Heart right ventricle (tissue), 16 donors: ENCODE measurements at regions of chr13 and their contacts with region 1.

Region 1: GRCh38 chr13:51583875-51584730 is at the start of gene WDFY2:
- DNase-seq: peak; percentile 100
- ATAC-seq: peak; percentile 94 to 98 (median 96)
- H3K4me3 ChIP-seq: peak within 1 kb of the TSS; percentile 68 to 94 (median 88)
- H3K27ac ChIP-seq: peak within 1 kb of the TSS; percentile 68 to 94 (median 90)
- H3K4me1 ChIP-seq: peaks cover 0 to 45% (median 32%) of the 10 kb centered on the region in 9 donors
- H3K27me3 ChIP-seq: no peaks in the 10 kb centered on the region
- CTCF ChIP-seq: peak in 4 of 9 donors; percentile 16 to 44 (median 36)
- total RNA-seq, gene WDFY2: 4.7 to 7.5 (median 6.2) TPM

Region 2: DNA sequence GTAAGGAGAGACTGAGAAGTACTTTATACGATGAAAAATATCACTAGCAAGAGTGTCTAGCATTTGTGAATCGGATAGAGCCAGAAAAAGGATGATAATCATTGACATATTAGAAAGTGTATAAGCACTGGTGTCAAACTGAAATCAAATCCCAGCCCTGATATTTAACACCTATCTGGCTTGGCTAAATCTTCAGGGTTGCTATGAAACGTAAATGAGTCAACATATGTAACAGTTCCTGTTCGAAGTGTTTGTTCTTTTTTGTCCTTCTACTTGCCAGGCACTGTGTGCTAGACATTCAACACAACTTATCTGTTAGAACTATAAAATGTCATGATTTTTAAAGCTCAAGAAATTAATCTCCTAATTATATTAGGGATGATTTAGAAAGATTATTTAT is 203.8 kb before region 1 on chr13:
- intact Hi-C with region 1: no loop called
- DNase-seq: no peak
- ATAC-seq: peak in 3 of 8 donors; percentile 64 to 88 (median 85)
- H3K4me3 ChIP-seq: no peak overlapping the region
- H3K27ac ChIP-seq: no peak overlapping the region
- H3K4me1 ChIP-seq: peaks cover 0 to 4% (median 0%) of the 10 kb centered on the region in 9 donors
- H3K27me3 ChIP-seq: no peaks in the 10 kb centered on the region
- CTCF ChIP-seq: no peak

Region 3: GRCh38 chr13:51452361-51453206 is 131.5 kb before region 1 on chr13 and contains the start of gene INTS6:
- intact Hi-C with region 1: loop called (anchors 1 to 10 kb)
- DNase-seq: peak; percentile 99 to 100
- ATAC-seq: peak; percentile 91 to 97 (median 96)
- H3K4me3 ChIP-seq: peak within 1 kb of the TSS; percentile 85 to 99 (median 94)
- H3K27ac ChIP-seq: peak within 1 kb of the TSS; percentile 91 to 100 (median 99)
- H3K4me1 ChIP-seq: peaks cover 2 to 47% (median 30%) of the 10 kb centered on the region in 9 donors
- H3K27me3 ChIP-seq: no peaks in the 10 kb centered on the region
- CTCF ChIP-seq: no peak
- total RNA-seq, gene INTS6: 20.2 to 31.1 (median 24.8) TPM

Region 4: GRCh38 chr13:51542346-51543242 is 41.5 kb before region 1 on chr13:
- intact Hi-C with region 1: loop called in 2 of 10 experiments (anchors 2 to 5 kb)
- DNase-seq: no peak
- ATAC-seq: peak in 1 of 8 donors; percentile 42
- H3K4me3 ChIP-seq: no peak overlapping the region
- H3K27ac ChIP-seq: peak overlapping the region in 1 of 10 donors; percentile 10
- H3K4me1 ChIP-seq: peaks cover 0 to 31% (median 5%) of the 10 kb centered on the region in 9 donors
- H3K27me3 ChIP-seq: no peaks in the 10 kb centered on the region
- CTCF ChIP-seq: no peak

Region 5: GRCh38 chr13:51729866-51730546 is 145.9 kb after region 1 on chr13:
- intact Hi-C with region 1: loop called in 7 of 10 experiments (anchors 2 to 10 kb)
- DNase-seq: no peak
- ATAC-seq: peak; percentile 43 to 80 (median 64)
- H3K4me3 ChIP-seq: peak overlapping the region in 1 of 10 donors; percentile 6
- H3K27ac ChIP-seq: peak overlapping the region; percentile 19 to 80 (median 58)
- H3K4me1 ChIP-seq: peaks cover 0 to 56% (median 27%) of the 10 kb centered on the region in 9 donors
- H3K27me3 ChIP-seq: no peaks in the 10 kb centered on the region
- CTCF ChIP-seq: no peak

Region 6: DNA sequence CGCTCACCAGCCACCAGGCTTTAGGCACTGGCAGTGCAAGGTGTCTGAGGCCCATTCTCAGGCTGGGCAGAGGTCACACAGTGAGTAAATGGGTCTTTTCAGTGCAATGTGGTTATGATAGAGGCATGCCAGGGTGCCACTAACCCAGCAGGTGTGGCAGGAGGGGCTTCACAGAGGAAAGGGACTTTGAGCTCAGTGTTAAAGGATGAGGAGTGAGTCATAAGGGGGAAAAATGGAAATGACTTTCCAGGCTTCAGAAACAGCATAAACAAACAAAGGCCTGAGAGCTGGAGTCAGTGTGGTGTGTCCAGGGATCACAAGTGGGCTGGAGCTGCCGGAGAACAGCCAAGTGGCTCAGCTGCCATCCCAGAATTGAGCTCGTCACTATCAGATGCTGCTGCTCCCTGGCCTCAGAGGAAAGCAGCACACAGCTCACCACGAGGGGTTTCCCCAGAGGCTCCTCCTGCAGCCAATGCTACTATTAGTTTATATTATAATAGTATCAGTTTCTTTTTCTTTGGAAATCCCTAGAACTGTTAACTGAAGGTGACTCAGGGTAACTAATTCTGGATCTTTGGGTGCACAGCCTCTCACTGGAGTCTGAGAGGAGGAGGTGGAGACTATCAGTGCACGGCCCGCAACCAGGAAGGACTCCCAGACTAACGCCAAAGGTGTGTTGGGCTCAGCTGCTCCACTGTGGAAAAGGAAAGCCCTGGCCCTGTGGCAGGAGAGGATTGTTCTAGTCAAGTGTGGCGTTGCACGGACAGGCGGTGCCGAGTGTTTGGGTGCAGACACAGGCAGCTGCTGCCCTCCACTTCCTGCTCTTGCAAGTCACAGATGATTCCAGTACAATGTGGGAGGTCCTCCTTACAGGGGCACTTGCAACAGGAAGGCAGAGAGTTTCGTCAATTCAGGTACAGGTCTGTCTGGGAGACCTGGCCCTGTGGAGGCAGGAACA is 180.4 kb after region 1 on chr13:
- intact Hi-C with region 1: loop called in 1 of 10 experiments (anchors 10 kb)
- DNase-seq: peak; percentile 58 to 70
- ATAC-seq: peak; percentile 80 to 91 (median 88)
- H3K4me3 ChIP-seq: peak overlapping the region in 2 of 10 donors; percentile 4 to 10
- H3K27ac ChIP-seq: peak overlapping the region; percentile 27 to 82 (median 72)
- H3K4me1 ChIP-seq: peaks cover 10 to 32% (median 30%) of the 10 kb centered on the region in 9 donors
- H3K27me3 ChIP-seq: no peaks in the 10 kb centered on the region
- CTCF ChIP-seq: no peak

Region 7: GRCh38 chr13:51781246-51782022 is 197.3 kb after region 1 on chr13:
- intact Hi-C with region 1: loop called in 1 of 10 experiments (anchors 10 kb)
- DNase-seq: no peak
- ATAC-seq: peak in 6 of 8 donors; percentile 39 to 57 (median 42)
- H3K4me3 ChIP-seq: no peak overlapping the region
- H3K27ac ChIP-seq: no peak overlapping the region
- H3K4me1 ChIP-seq: peaks cover 5 to 11% (median 11%) of the 10 kb centered on the region in 9 donors
- H3K27me3 ChIP-seq: no peaks in the 10 kb centered on the region
- CTCF ChIP-seq: peak in 5 of 9 donors; percentile 12 to 42 (median 34)

Region 8: GRCh38 chr13:51803422-51804294 is 219.6 kb after region 1 on chr13 and contains the start of gene DHRS12:
- intact Hi-C with region 1: loop called in 5 of 10 experiments (anchors 2 to 10 kb)
- DNase-seq: peak; percentile 93 to 95
- ATAC-seq: peak; percentile 84 to 92 (median 90)
- H3K4me3 ChIP-seq: peak within 1 kb of the TSS; percentile 39 to 87 (median 64)
- H3K27ac ChIP-seq: peak within 1 kb of the TSS; percentile 97 to 100 (median 100)
- H3K4me1 ChIP-seq: peaks cover 14 to 62% (median 40%) of the 10 kb centered on the region in 9 donors
- H3K27me3 ChIP-seq: no peaks in the 10 kb centered on the region
- CTCF ChIP-seq: peak in 4 of 9 donors; percentile 10 to 32 (median 18)
- total RNA-seq, gene DHRS12: 8.6 to 14.0 (median 10.3) TPM